ENCODE measurements at regions of chr3 and their contacts with region 1.

Region 1: GRCh38 chr3:15440891-15441290 is 13.5 kb downstream of the EAF1 start:
- DNase-seq: no peak
- ATAC-seq: no peak
- H3K4me3 ChIP-seq: no peak overlapping the region
- H3K27ac ChIP-seq: no peak overlapping the region
- H3K4me1 ChIP-seq: no peaks in the 10 kb centered on the region
- H3K27me3 ChIP-seq: no peaks in the 10 kb centered on the region
- CTCF ChIP-seq: no peak

Region 2: DNA sequence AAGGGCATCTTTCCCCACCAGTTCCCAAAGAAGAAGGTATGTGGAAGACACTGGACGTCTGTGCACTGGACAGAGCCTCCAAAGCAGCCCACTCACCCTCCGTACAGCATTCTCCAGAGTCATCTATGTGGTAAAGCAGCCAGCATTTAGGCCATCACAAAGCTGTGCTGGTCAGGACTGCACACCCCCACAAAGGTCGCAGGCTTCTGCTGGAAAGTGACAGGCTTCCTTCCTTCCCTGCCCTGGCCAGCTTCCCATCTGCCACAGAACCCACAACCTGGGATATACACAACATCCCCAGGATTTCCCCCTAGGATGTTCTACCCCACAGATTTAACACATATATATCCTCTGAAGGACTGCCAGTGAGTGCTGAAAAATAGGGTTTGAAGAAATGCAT is 669.0 kb after region 1 on chr3:
- CTCF ChIA-PET with region 1: no interaction called
- POLR2A ChIA-PET with region 1: no interaction called
- intact Hi-C with region 1: loop called (anchors 5 kb)
- DNase-seq: no peak
- ATAC-seq: no peak
- H3K4me3 ChIP-seq: no peak overlapping the region
- H3K27ac ChIP-seq: no peak overlapping the region
- H3K4me1 ChIP-seq: peaks cover 10% of the 10 kb centered on the region; the same call in 1 of the 2 replicates
- H3K27me3 ChIP-seq: no peaks in the 10 kb centered on the region
- CTCF ChIP-seq: no peak

Measured in PC-3 (cell line).